Heart left ventricle (tissue), 16 donors: ENCODE measurements at regions of chr3 and their contacts with region 1.

Region 1: DNA sequence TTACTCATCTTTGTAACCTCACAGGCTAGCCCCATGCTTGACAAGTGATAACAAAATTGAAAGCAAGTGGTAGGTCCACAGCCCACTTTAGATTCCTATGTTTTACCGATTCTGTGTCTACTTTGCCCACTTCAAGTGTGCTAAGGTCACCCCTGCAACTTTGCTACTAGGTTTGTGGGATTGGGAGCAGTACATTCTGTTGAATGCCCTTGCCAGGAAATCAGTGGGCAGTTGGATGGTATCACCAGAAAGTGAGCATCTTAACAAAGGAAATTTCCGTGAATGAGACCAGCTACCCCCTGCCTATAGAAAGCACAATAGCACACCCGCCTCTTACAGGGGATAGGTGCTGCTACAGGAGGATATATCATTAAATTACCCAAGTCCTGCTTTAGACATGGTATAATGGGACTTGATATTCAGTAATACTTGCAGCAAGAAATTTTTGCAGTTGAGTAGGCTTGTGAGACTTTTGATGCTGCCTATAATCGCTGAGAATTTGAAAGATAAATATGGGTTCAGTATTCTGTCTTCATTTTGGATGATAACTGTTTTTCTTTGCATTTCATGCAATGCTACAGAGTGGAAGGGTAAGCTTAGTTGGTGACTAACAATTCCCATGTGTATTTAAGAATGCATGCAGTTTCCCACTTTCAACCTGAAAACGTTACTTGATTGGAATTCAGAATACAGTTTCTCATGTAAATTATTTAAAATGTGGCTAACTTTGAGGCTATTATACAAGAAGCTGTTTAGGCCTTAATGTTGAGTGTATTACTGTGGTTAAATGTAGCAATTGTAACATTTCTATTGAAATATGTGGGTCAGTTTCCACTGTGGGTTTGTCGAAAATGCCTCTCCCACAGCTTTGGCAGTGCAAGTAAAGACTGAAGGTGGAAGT is 9.5 kb downstream of the EBLN2 start:
- DNase-seq: no peak
- ATAC-seq: peak in 1 of 4 donors; percentile 5
- H3K4me3 ChIP-seq: no peak overlapping the region
- H3K27ac ChIP-seq: no peak overlapping the region
- H3K4me1 ChIP-seq: peaks cover 0 to 16% (median 9%) of the 10 kb centered on the region in 12 donors
- H3K27me3 ChIP-seq: no peaks in the 10 kb centered on the region
- CTCF ChIP-seq: no peak
- POLR2A ChIP-seq: no peak

Region 2: GRCh38 chr3:72855001-72855400 is 215.9 kb before region 1 on chr3:
- intact Hi-C with region 1: loop called in 1 of 10 experiments (anchors 10 kb)
- DNase-seq: no peak
- ATAC-seq: no peak
- H3K4me3 ChIP-seq: no peak overlapping the region
- H3K27ac ChIP-seq: no peak overlapping the region
- H3K4me1 ChIP-seq: peaks cover 0 to 3% (median 0%) of the 10 kb centered on the region in 12 donors
- H3K27me3 ChIP-seq: no peaks in the 10 kb centered on the region
- CTCF ChIP-seq: no peak
- POLR2A ChIP-seq: no peak

Region 3: DNA sequence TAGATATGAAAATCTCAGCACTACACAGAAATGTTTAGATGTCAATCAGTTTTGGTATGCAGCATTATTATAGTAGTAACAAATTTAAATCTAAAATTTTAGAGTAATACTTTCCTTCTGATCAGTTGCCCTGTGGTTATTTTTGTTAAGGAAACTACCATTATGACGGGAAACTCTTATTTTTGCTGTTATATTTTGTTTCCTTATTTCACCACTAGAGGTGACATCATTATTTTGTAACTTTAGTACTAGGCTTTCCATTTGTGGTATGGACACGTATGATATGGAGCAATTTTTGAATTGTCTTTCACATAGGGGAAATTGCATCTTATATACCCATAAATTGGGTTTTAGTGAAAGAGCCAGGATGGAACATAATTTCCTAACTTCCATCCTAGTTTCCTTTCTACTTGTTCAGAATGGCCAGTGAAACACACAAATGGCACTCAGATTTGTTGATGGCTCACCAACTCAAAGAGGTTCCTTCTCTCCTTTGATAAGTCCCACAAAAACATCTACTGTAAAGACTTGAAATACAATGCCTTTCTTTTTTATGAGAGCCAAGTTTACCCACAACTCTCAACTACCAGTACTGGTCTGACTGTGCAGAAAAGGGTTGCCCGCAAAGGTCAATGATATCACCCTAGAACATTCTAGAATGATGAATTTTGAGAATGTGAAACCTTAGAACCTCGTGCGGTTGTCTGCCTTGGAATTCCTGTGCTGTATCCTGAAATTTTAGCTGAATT is 93.7 kb before region 1 on chr3:
- intact Hi-C with region 1: no loop called
- DNase-seq: no peak
- ATAC-seq: no peak
- H3K4me3 ChIP-seq: no peak overlapping the region
- H3K27ac ChIP-seq: no peak overlapping the region
- H3K4me1 ChIP-seq: peaks cover 0 to 11% (median 0%) of the 10 kb centered on the region in 12 donors
- H3K27me3 ChIP-seq: no peaks in the 10 kb centered on the region
- CTCF ChIP-seq: peak in 3 of 12 donors; percentile 4 to 29 (median 12)
- POLR2A ChIP-seq: no peak

Region 4: GRCh38 chr3:73121669-73122331 is 50.9 kb after region 1 on chr3:
- intact Hi-C with region 1: no loop called
- DNase-seq: no peak
- ATAC-seq: no peak
- H3K4me3 ChIP-seq: no peak overlapping the region
- H3K27ac ChIP-seq: no peak overlapping the region
- H3K4me1 ChIP-seq: no peaks in the 10 kb centered on the region
- H3K27me3 ChIP-seq: no peaks in the 10 kb centered on the region
- CTCF ChIP-seq: no peak
- POLR2A ChIP-seq: no peak